GM12878 (cell line): ENCODE measurements at regions of chr12 and their contacts with region 1.

Region 1: DNA sequence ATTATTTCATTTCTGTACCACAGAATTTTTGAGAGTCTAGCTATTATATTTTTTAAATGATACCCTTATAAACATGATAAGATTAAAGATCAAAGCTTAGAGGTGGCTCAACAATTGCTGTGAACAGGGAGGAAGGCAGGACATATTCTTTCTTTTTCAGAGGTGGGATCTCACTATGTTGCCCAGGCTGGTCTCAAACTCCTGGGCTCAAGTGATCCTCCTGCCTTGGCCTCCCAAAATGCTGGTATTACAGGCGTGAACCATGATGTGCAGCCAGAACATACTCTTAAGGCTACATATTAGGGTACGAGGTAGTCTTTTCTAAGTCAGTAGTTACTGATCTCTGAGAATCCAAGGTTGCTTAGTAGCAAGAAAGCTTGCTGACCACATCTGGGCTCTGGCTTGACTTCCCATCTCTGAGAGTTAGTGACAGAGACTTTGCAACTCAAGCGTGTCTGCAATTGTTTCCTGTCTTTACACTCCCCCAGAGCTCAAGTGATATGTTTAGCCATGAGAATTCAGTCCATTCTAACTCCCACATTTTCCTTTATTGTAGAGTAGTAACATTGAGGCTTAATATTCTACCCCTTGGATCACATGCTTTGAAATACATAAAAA is 8.6 kb downstream of the RAB5B start:
- DNase-seq: peak; percentile 60
- ATAC-seq: peak; percentile 96
- H3K4me3 ChIP-seq: 0 out of 2 replicates have a peak overlapping the region, but pooled peaks have one; percentile 12
- H3K27ac ChIP-seq: peak overlapping the region; percentile 38
- H3K4me1 ChIP-seq: peaks cover 16% of the 10 kb centered on the region
- H3K27me3 ChIP-seq: no peaks in the 10 kb centered on the region
- CTCF ChIP-seq: no peak
- EP300 ChIP-seq: no peak
- POLR2A ChIP-seq: no peak
- RAD21 ChIP-seq: no peak

Region 2: DNA sequence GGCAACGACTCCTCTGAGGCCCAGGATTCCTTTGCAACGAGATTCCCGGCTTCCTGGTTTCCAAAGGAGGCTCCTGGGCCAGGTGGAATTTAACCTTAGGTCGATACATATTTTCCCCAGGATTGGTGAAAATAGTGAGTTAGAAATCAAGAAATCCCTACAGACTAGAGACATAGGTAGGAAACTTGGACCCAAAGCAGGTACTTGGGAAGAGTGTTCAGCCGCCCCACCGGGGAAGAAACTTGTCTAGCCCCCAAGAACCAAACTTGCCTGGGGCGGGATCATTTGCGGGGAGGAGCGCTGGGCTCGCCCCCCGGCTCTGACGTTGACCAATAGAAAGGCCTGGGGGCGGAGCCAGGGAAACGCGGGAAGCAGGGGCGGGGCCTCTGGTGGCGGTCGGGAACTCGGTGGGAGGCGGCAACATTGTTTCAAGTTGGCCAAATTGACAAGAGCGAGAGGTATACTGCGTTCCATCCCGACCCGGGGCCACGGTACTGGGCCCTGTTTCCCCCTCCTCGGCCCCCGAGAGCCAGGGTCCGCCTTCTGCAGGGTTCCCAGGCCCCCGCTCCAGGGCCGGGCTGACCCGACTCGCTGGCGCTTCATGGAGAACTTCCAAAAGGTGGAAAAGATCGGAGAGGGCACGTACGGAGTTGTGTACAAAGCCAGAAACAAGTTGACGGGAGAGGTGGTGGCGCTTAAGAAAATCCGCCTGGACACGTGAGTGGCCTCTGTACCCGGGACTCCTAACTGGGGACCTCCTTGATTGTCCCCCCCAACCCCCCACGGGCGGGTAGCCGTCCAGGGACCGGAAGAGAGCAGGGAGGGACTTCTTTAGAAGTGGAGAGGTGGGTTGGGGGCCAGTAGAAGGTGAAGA is 15.8 kb before region 1 on chr12 and contains the start of gene CDK2:
- CTCF ChIA-PET with region 1: interaction called, 17 read pairs
- POLR2A ChIA-PET with region 1: interaction called, 27 read pairs
- RAD21 ChIA-PET with region 1: interaction called, 15 read pairs
- SMC1A ChIA-PET with region 1: interaction called, 25 read pairs
- in situ Hi-C with region 1: no loop called
- intact Hi-C with region 1: no loop called
- DNase-seq: peak; percentile 40
- ATAC-seq: peak; percentile 91
- H3K4me3 ChIP-seq: peak within 1 kb of the TSS; percentile 96
- H3K27ac ChIP-seq: peak within 1 kb of the TSS; percentile 79
- H3K4me1 ChIP-seq: peaks cover 15% of the 10 kb centered on the region
- H3K27me3 ChIP-seq: no peaks in the 10 kb centered on the region
- CTCF ChIP-seq: no peak
- EP300 ChIP-seq: no peak
- POLR2A ChIP-seq: peak; percentile 81
- RAD21 ChIP-seq: no peak
- polyA plus RNA-seq, gene CDK2: 13.1 to 16.1 TPM

Region 3: GRCh38 chr12:56307221-56307965 is 325.0 kb after region 1 on chr12:
- CTCF ChIA-PET with region 1: no interaction called
- POLR2A ChIA-PET with region 1: no interaction called
- RAD21 ChIA-PET with region 1: no interaction called
- SMC1A ChIA-PET with region 1: no interaction called
- in situ Hi-C with region 1: no loop called
- intact Hi-C with region 1: no loop called
- DNase-seq: no peak
- ATAC-seq: no peak
- H3K4me3 ChIP-seq: no peak overlapping the region
- H3K27ac ChIP-seq: no peak overlapping the region
- H3K4me1 ChIP-seq: peaks cover 4% of the 10 kb centered on the region; the same call in 1 of the 2 replicates
- H3K27me3 ChIP-seq: no peaks in the 10 kb centered on the region
- CTCF ChIP-seq: no peak
- EP300 ChIP-seq: no peak
- POLR2A ChIP-seq: no peak
- RAD21 ChIP-seq: no peak